Prostate gland (tissue), 2 donors: ENCODE measurements at regions of chr10 and their contacts with region 1.

Region 1: DNA sequence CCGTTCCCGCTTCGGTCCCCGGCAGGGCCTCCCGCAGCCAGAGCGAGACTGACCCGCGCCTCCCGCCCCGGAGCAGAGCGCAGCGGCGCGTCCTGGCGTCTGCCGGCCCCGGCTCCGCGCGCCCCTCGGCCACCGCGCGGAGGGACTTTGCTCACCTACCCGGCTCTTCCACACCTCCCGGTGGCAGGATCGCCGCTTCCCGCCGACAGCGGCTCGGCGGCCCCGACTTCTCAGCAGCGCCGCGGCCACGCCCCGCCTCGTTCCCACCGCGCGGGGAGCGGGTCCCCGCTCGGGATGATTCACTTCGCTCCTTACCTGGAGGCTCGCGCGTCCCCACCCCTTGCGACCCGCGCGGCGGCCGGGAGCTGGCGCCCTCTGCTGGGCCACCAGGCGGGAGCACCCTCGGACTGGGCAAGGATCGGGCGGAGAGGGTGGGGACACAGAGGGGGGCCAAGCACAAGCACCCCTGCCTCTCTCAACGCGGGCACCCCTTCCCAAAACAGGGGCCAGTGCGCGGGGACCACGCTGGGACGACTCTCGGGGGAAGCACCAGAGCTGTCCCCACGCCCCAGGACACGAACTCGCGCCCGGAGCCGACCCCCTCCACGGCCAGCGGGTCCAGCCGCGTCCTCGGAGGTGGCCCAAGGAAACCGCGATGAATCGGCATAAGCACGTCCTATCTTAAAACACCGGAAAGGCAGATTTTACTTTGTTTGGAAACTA is 101.0 kb upstream of the SVIL start:
- DNase-seq: peak; percentile 90
- H3K4me3 ChIP-seq: peak overlapping the region; percentile 79 to 86
- H3K27ac ChIP-seq: peak overlapping the region; percentile 95
- H3K4me1 ChIP-seq: no peaks in the 10 kb centered on the region
- H3K27me3 ChIP-seq: no peaks in the 10 kb centered on the region
- CTCF ChIP-seq: peak; percentile 89 to 99 (median 94)
- POLR2A ChIP-seq: peak; percentile 84

Region 2: DNA sequence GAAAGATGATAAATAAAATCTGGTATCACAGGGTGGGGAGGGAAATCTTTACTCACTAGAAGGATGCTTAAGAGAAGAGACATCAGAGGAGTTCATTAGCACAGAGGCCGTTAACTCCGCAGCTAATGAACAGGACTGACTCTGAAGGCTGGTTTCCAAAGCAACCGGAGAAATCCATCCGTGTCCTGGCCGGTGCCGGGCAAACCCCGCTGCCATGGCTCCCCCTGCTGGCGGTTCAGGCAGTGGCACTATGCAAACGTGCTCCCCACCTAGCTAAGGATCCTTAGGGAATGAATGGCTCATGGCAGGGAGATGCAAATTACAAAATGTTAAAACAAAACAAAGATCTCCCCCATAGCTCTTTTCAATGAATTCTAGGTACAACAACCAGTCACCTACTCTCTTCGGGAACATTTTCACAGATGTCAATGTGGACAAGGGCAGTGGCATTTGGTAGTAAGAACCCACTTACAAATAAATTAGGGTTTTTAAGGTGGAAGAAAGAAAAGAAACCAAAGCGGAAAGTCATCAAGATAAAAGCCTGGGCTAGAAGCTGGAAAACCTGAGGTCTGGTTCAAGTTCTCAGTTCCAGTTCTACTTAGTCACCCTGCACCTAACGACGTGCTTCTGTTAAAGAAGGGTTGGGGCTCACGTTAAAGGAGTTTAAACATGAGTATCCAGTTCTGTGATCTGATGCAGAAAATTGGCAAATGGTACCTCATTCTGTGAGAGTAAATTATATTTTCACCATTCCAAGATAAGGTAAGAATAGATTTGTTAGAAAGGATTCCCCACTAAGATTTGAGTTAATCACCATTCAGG is 239.2 kb before region 1 on chr10:
- intact Hi-C with region 1: no loop called
- DNase-seq: peak; percentile 46
- H3K4me3 ChIP-seq: no peak overlapping the region
- H3K27ac ChIP-seq: no peak overlapping the region
- H3K4me1 ChIP-seq: no peaks in the 10 kb centered on the region
- H3K27me3 ChIP-seq: no peaks in the 10 kb centered on the region
- CTCF ChIP-seq: peak; percentile 67 to 89 (median 82)
- POLR2A ChIP-seq: no peak

Region 3: GRCh38 chr10:29517352-29517923 is 218.3 kb before region 1 on chr10:
- intact Hi-C with region 1: loop called (anchors 10 kb)
- DNase-seq: no peak
- H3K4me3 ChIP-seq: no peak overlapping the region
- H3K27ac ChIP-seq: no peak overlapping the region
- H3K4me1 ChIP-seq: peaks cover 3% of the 10 kb centered on the region
- H3K27me3 ChIP-seq: no peaks in the 10 kb centered on the region
- CTCF ChIP-seq: peak; percentile 16 to 25 (median 21)
- POLR2A ChIP-seq: no peak

Region 4: DNA sequence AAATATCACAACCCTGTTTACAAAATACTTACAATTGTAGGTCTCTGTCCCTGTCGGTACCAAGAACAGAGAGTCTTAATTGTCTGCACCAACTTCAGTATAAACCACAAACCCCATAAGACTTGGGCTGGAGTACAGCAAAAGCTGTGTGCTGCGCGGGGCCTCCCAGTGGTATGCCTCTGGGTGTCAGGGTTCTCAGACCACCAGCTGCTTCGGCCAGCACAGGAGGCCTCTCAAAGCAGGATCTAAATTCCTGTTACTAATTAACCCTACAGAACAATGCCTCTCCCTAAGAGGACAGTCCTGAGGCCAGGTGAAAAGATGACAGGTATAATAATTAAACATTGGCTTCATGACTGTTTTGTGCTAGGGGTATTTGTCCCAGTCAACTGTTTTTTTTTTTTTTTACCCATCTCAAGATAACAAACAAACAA is 100.0 kb before region 1 on chr10:
- intact Hi-C with region 1: loop called (anchors 5 kb)
- DNase-seq: no peak
- H3K4me3 ChIP-seq: no peak overlapping the region
- H3K27ac ChIP-seq: peak overlapping the region; percentile 78 to 84
- H3K4me1 ChIP-seq: peaks cover 14% of the 10 kb centered on the region
- H3K27me3 ChIP-seq: no peaks in the 10 kb centered on the region
- CTCF ChIP-seq: no peak
- POLR2A ChIP-seq: no peak

Region 5: DNA sequence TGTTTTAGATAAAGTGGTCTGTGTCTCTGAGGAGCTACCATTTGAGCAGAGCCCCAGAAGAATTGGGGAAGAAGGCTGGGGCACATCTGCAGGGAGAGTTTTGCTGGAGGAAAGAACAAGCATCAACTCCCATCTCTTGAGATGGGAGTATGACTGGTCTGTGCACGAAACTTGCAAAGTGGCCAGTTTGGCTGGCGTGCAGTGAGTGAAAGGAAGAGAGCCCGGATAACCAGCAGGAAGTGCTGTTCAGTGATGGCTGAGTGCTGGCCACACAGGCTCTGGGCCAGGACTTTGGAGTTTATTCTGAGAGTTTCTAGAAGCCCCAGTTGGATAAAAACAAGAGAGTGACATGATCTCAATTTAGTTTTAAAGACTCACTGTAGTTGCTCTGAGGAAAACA is 66.6 kb before region 1 on chr10:
- intact Hi-C with region 1: no loop called
- DNase-seq: no peak
- H3K4me3 ChIP-seq: no peak overlapping the region
- H3K27ac ChIP-seq: no peak overlapping the region
- H3K4me1 ChIP-seq: no peaks in the 10 kb centered on the region
- H3K27me3 ChIP-seq: no peaks in the 10 kb centered on the region
- CTCF ChIP-seq: no peak
- POLR2A ChIP-seq: no peak

Region 6: DNA sequence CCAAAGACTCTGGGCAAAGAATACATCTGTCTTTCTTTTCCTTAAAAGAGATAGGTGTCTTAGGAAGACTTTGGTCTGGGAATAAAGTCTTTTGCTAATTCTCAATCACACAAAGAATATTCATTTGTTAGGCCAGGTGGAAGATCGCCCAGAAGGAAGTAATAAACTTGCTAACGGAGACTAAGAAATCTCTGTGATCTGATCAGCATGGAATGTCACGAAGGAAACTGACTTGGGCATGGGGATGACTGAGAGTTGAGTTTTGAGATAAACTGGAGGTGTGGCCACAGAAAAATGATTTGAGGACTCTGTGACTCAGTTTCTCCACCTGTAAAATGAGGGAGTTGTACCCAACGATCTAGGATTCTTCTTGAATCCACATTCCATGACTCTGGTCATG is 60.1 kb after region 1 on chr10:
- intact Hi-C with region 1: loop called (anchors 2 kb)
- DNase-seq: peak; percentile 62
- H3K4me3 ChIP-seq: no peak overlapping the region
- H3K27ac ChIP-seq: peak overlapping the region; percentile 74 to 82
- H3K4me1 ChIP-seq: no peaks in the 10 kb centered on the region
- H3K27me3 ChIP-seq: no peaks in the 10 kb centered on the region
- CTCF ChIP-seq: no peak
- POLR2A ChIP-seq: no peak

Region 7: DNA sequence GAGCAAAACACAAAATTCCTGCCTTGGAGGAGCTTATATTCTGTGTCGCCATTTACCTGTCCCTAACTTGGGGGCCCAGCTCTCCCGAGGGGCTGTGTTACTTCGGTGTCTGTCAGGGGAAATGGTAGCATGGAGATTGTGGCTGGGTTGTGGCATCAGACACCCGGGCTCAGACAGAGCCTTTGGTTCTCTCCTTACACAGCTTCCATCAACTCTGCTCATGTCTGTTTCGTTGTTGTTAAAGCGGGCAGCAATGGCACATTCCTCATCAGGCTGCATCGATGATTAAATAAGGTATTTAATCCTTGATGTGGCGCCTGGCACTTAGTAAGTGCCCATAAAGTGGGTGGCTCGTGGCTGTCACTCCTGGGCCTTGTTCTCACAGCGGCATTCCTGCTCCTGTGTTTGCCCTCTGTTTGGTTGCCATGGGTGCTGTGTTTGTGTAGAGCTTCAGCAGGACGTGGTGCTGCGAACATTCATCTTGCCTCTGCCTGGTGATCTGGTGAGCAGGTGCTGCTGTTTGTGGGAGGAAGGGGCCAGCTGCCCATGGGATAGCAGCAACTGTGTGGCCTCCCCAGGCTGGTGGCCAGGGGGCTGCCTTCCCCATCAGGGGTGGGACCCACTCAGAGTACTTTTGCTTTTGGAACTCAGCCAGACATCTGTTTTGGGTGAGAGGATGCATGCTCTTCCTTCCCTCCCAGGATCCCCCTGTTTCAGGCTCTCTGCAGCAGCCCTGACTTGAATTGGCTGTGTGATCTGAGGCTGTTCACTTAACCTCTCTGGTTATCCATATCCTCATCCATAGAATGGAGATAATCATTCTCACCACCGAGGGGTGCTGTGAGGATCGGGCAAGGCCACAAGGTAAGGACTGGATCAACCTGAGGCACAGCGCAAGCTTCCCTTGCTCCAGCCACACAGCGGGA is 106.2 kb after region 1 on chr10:
- intact Hi-C with region 1: loop called (anchors 5 kb)
- DNase-seq: peak; percentile 54
- H3K4me3 ChIP-seq: no peak overlapping the region
- H3K27ac ChIP-seq: peak overlapping the region; percentile 78 to 86
- H3K4me1 ChIP-seq: peaks cover 3% of the 10 kb centered on the region
- H3K27me3 ChIP-seq: no peaks in the 10 kb centered on the region
- CTCF ChIP-seq: no peak
- POLR2A ChIP-seq: no peak

Region 8: DNA sequence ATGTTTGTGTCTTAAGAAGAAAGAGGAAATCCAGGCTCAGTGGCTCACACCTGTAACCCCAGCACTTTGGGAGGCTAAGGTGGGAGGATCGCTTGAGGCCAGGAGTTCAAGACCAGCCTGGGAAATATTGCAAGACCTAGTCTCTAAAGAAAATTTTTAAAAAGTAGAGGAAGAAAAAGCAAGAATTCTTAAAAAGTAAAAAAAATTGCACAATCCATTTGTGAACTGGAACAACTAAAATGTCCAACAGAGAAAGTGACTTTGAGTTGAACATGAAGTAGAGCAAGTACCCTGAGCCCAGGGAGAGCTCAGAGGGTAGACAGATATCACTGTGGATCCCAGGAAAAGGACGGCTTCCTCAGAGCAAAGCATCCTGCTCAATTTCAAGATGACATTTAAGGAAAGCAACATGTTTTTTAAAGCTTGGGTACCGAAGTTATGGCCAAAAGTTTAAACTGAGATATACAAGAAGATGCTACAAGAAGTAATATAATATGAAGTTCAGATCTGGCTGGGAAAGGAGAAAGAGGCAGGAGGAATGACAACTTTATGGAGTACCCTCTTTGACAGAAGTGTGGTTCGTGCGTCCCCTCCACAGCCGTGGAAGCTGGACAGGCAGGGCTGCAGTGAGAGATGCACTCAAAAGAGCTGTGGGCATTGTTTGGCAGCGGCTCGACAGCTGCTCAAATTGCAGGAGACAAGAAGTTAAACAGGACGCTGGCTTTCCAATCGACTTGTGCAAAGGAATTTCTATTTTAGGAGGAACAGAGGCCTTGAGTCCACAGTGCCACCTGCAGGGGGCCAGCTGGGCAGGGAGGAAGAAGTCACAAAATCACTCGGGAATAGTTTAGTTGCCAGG is 122.3 kb after region 1 on chr10:
- intact Hi-C with region 1: loop called (anchors 2 kb)
- DNase-seq: peak; percentile 74
- H3K4me3 ChIP-seq: no peak overlapping the region
- H3K27ac ChIP-seq: peak overlapping the region; percentile 29 to 56
- H3K4me1 ChIP-seq: no peaks in the 10 kb centered on the region
- H3K27me3 ChIP-seq: no peaks in the 10 kb centered on the region
- CTCF ChIP-seq: peak in 3 of 4 experiments; percentile 60 to 79 (median 67)
- POLR2A ChIP-seq: no peak

Region 9: DNA sequence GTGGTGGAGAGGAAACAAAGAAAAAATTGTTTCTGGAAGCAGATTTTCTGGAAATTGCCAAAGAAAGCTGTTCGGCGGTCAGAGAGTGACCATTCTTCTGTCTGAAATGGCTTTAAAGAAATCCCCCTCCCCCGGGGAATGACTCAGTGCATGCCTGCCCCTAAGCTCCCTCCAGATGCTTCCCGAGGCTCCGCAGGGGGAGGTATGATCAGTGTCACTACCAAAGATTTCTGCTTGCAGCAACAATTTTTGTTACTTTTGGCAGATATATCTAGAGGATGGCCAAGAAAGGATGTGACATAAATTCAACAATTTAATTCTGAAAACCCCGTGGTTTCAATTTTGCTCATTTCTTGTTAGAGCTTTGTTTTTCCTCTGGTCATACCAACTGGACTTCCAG is 159.7 kb after region 1 on chr10:
- intact Hi-C with region 1: no loop called
- DNase-seq: no peak
- H3K4me3 ChIP-seq: no peak overlapping the region
- H3K27ac ChIP-seq: no peak overlapping the region
- H3K4me1 ChIP-seq: no peaks in the 10 kb centered on the region
- H3K27me3 ChIP-seq: no peaks in the 10 kb centered on the region
- CTCF ChIP-seq: no peak
- POLR2A ChIP-seq: no peak

Region 10: GRCh38 chr10:30080161-30080560 is 344.4 kb after region 1 on chr10:
- intact Hi-C with region 1: no loop called
- DNase-seq: no peak
- H3K4me3 ChIP-seq: no peak overlapping the region
- H3K27ac ChIP-seq: no peak overlapping the region
- H3K4me1 ChIP-seq: no peaks in the 10 kb centered on the region
- H3K27me3 ChIP-seq: no peaks in the 10 kb centered on the region
- CTCF ChIP-seq: no peak
- POLR2A ChIP-seq: no peak